CD4-positive, alpha-beta T cell (primary cell): ENCODE measurements at regions of chr19 and their contacts with region 1.

Region 1: DNA sequence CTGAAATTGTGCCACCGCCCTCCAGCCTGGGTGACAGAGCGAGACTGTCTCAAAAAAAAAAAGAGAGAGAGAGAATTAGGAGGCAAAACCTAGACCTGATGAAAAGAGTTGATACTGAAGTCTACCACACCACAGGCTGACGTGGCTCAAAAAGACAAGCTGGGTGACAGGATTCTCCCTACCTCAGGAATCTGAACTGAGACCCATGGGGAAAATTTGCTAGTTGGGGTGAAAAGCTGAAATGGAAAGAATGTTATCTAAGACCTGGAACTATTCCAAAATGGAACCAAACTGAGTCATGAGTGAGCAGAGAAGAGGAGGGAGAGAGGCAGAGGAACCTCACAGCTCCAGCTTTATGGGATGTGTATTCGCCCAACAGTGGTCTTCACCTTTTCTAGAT is 11.7 kb downstream of the SMG9 start:
- DNase-seq: no peak
- ATAC-seq: no peak
- H3K4me3 ChIP-seq: no peak overlapping the region
- H3K4me3 Mint-ChIP-seq: no peak overlapping the region
- H3K27ac ChIP-seq: no peak overlapping the region
- H3K27ac Mint-ChIP-seq: no peak overlapping the region
- H3K4me1 ChIP-seq: peaks cover 15% of the 10 kb centered on the region
- H3K4me1 Mint-ChIP-seq: peaks cover 9% of the 10 kb centered on the region
- H3K27me3 ChIP-seq: no peaks in the 10 kb centered on the region
- H3K27me3 Mint-ChIP-seq: no peaks in the 10 kb centered on the region
- CTCF ChIP-seq: no peak

Region 2: GRCh38 chr19:43675269-43675879 is 67.6 kb before region 1 on chr19:
- CTCF ChIA-PET with region 1: interaction called, 5 read pairs
- POLR2A ChIA-PET with region 1: no interaction called
- intact Hi-C with region 1: loop called in 1 of 2 experiments (anchors 5 kb)
- DNase-seq: peak in 2 of 14 experiments; percentile 40 to 54
- ATAC-seq: no peak
- H3K4me3 ChIP-seq: no peak overlapping the region
- H3K4me3 Mint-ChIP-seq: no peak overlapping the region
- H3K27ac ChIP-seq: no peak overlapping the region
- H3K27ac Mint-ChIP-seq: no peak overlapping the region
- H3K4me1 ChIP-seq: peaks cover 7% of the 10 kb centered on the region
- H3K4me1 Mint-ChIP-seq: peaks cover 6% of the 10 kb centered on the region
- H3K27me3 ChIP-seq: no peaks in the 10 kb centered on the region
- H3K27me3 Mint-ChIP-seq: no peaks in the 10 kb centered on the region
- CTCF ChIP-seq: no peak

Region 3: DNA sequence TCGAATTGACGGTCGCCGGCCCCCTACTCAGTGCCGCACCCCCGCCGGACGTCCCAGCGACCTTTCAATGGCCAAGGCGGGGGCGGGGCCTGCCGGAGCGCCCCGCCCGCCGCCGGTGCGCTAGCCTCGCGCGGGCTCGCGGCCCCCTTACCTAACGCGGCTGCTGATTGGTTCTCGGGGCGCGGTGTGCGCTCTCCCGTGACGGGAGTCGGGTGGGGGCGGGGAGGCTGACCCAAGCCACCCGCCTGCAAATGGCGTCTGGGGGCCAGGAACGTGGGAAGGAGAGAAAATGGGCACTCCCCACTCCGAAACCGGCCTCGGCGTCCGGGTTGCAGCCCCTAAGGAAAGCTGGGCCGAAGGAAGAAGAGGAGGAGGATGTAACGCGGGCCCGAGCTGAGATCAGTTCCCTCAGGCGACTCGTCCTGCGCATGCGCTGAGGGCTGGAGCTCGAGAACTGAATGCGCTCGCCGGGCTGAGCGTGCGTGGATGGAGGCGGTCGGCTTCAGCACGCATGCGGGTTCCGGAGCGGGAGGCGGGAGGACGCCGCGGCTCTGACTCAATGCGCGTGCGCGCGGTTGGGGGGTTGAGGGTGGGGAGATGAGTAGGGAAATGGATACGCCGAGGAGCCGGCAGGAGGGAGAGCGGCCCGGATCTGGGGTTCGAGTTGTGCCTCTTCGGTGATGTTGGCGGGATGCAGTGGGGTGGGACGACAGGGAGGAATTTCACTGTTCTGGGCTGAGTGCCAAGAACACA is 11.7 kb after region 1 on chr19 and contains the start of gene SMG9:
- CTCF ChIA-PET with region 1: interaction called, 22 read pairs
- POLR2A ChIA-PET with region 1: interaction called, 5 read pairs
- intact Hi-C with region 1: no loop called
- DNase-seq: peak; percentile 96 to 100 (median 98)
- ATAC-seq: peak; percentile 79
- H3K4me3 ChIP-seq: peak within 1 kb of the TSS; percentile 95
- H3K4me3 Mint-ChIP-seq: peak within 1 kb of the TSS; percentile 98
- H3K27ac ChIP-seq: peak within 1 kb of the TSS; percentile 97 to 99
- H3K27ac Mint-ChIP-seq: peak within 1 kb of the TSS; percentile 95
- H3K4me1 ChIP-seq: peaks cover 42% of the 10 kb centered on the region
- H3K4me1 Mint-ChIP-seq: peaks cover 43% of the 10 kb centered on the region
- H3K27me3 ChIP-seq: no peaks in the 10 kb centered on the region
- H3K27me3 Mint-ChIP-seq: no peaks in the 10 kb centered on the region
- CTCF ChIP-seq: no peak
- total RNA-seq, gene SMG9: 34.7 to 38.2 TPM

Region 4: DNA sequence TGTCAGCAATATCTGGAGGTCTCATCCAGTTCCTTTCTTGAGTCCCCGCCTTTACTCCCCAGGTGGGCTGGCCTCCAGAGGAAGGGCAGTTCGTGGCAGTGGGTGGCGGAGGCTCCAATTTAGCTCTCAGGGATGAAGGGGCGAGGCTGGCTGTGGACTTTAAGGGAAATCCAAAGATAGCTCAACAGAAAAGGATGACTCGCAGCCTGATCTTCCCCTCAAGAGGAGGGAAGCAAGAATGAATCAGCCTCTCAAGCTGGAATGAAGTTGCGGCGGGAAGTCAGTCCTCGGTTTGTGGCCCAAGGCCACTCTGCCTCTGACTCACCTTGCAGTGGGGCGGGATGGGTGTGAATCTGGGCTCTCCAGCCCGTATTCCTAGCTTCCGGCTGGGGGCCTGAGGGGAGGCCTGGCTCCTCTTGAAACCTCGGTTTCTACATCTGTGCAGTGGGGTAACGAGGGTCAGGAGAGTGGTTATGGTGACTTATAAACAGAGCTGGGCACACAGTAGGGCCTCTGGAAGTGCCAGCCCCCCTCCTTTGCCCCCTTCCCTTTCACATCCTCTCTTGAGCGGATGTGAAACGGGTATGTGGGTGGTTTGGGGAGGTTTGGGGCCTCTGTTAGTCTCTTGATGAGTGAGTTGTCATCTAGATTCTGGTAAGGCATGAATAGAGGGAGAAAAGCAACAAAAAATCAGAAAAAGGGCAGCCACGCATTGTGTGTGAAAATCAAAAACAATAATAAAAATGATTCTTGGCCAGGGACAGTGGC is 22.3 kb after region 1 on chr19:
- CTCF ChIA-PET with region 1: interaction called, 27 read pairs
- POLR2A ChIA-PET with region 1: interaction called, 3 read pairs
- intact Hi-C with region 1: no loop called
- DNase-seq: peak in 13 of 14 experiments; percentile 45 to 87 (median 61)
- ATAC-seq: peak; percentile 81
- H3K4me3 ChIP-seq: no peak overlapping the region
- H3K4me3 Mint-ChIP-seq: peak overlapping the region; percentile 44
- H3K27ac ChIP-seq: peak overlapping the region; percentile 48 to 79
- H3K27ac Mint-ChIP-seq: peak overlapping the region; percentile 86
- H3K4me1 ChIP-seq: peaks cover 45% of the 10 kb centered on the region
- H3K4me1 Mint-ChIP-seq: peaks cover 26% of the 10 kb centered on the region
- H3K27me3 ChIP-seq: no peaks in the 10 kb centered on the region
- H3K27me3 Mint-ChIP-seq: no peaks in the 10 kb centered on the region
- CTCF ChIP-seq: no peak

Region 5: DNA sequence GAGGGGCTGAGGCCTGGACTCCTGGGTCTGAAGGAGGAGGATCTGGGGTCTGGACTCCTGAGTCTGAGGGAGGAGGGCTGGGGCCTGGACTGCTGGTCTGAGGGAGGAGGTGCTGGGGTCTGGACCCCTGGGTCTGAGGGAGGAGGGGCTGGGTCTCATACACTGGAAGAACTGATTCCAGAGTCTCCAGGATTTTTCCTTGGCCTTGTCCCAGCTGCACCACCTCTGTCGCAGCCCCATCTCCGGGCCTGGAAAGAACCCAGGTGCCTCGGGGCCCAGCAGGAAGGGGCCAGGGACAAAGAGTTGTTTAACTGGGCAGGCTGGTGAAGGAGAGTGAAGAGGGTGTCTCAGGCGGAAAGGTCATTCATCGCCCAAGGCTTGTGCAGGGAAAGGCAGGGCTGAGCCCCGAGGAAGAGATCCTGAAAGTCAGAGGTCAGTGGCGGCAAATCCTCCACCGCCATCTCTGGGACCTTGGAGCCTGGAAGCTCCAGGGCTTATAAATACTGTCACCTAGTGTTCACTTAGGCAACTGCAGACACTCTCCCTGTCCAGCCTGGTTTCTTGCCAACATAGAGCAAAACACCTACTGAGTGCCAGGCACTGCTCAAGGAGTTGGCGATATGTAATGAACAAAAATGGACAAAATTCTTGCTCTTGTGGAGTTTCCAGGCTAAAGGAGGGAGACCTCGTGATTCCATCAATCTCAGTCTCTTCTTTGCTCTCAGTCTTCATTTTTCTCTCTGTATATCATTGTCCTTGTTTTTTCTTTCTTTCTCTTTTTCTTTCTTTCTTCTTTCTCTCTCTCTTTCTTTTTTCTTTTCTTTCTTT is 42.2 kb after region 1 on chr19:
- CTCF ChIA-PET with region 1: interaction called, 40 read pairs
- POLR2A ChIA-PET with region 1: interaction called, 7 read pairs
- intact Hi-C with region 1: loop called (anchors 1 kb)
- DNase-seq: peak in 11 of 14 experiments; percentile 21 to 83 (median 41)
- ATAC-seq: peak; percentile 51
- H3K4me3 ChIP-seq: peak overlapping the region; percentile 3
- H3K4me3 Mint-ChIP-seq: peak overlapping the region; percentile 71
- H3K27ac ChIP-seq: peak overlapping the region; percentile 70 to 75
- H3K27ac Mint-ChIP-seq: peak overlapping the region; percentile 90
- H3K4me1 ChIP-seq: peaks cover 50% of the 10 kb centered on the region
- H3K4me1 Mint-ChIP-seq: peaks cover 45% of the 10 kb centered on the region
- H3K27me3 ChIP-seq: no peaks in the 10 kb centered on the region
- H3K27me3 Mint-ChIP-seq: peaks cover 5% of the 10 kb centered on the region
- CTCF ChIP-seq: peak; percentile 95

Region 6: GRCh38 chr19:43809762-43810696 is 67.0 kb after region 1 on chr19:
- CTCF ChIA-PET with region 1: interaction called, 41 read pairs
- POLR2A ChIA-PET with region 1: interaction called, 9 read pairs
- intact Hi-C with region 1: loop called (anchors 1 kb)
- DNase-seq: peak in 3 of 14 experiments; percentile 63 to 76 (median 73)
- ATAC-seq: peak; percentile 70
- H3K4me3 ChIP-seq: no peak overlapping the region
- H3K4me3 Mint-ChIP-seq: no peak overlapping the region
- H3K27ac ChIP-seq: no peak overlapping the region
- H3K27ac Mint-ChIP-seq: no peak overlapping the region
- H3K4me1 ChIP-seq: peaks cover 8% of the 10 kb centered on the region
- H3K4me1 Mint-ChIP-seq: no peaks in the 10 kb centered on the region
- H3K27me3 ChIP-seq: no peaks in the 10 kb centered on the region
- H3K27me3 Mint-ChIP-seq: peaks cover 31% of the 10 kb centered on the region
- CTCF ChIP-seq: peak; percentile 74